GM12878 (cell line): ENCODE measurements at regions of chr1 and their contacts with region 1.

Region 1: DNA sequence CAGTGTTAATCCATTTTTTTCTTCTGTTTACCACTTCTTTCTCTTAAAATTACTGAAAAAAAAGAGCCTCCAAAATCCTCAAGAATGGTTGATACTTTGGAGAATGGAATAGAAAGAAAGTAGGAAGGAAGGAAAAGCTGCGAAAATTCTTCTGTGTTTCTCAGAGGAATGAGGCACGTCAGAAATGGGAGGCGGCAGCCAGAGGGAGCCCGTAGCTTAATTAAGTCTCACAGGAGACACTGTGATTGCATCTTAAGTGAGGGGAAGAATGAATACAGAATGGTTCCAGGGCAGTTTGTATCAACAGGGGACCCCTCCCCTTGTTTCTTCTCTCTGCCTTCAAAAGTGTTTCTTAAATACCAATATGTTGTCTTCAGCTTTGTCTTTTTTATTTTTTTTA is 1099.5 kb downstream of the PLA2G4A start:
- DNase-seq: no peak
- ATAC-seq: peak; percentile 92
- H3K4me3 ChIP-seq: no peak overlapping the region
- H3K27ac ChIP-seq: no peak overlapping the region
- H3K4me1 ChIP-seq: no peaks in the 10 kb centered on the region
- H3K27me3 ChIP-seq: no peaks in the 10 kb centered on the region
- CTCF ChIP-seq: peak; percentile 38 to 81 (median 40); a peak in 4 of 6 replicates
- EP300 ChIP-seq: no peak
- POLR2A ChIP-seq: no peak
- RAD21 ChIP-seq: peak; percentile 90

Region 2: GRCh38 chr1:187985897-187986654 is 57.8 kb after region 1 on chr1:
- CTCF ChIA-PET with region 1: interaction called, 5 read pairs
- POLR2A ChIA-PET with region 1: no interaction called
- RAD21 ChIA-PET with region 1: interaction called, 15 read pairs
- SMC1A ChIA-PET with region 1: interaction called, 8 read pairs
- in situ Hi-C with region 1: no loop called
- intact Hi-C with region 1: no loop called
- DNase-seq: peak; percentile 48
- ATAC-seq: peak; percentile 87
- H3K4me3 ChIP-seq: no peak overlapping the region
- H3K27ac ChIP-seq: peak overlapping the region; percentile 69
- H3K4me1 ChIP-seq: peaks cover 11% of the 10 kb centered on the region
- H3K27me3 ChIP-seq: no peaks in the 10 kb centered on the region
- CTCF ChIP-seq: no peak
- EP300 ChIP-seq: peak; percentile 81 to 84
- POLR2A ChIP-seq: no peak
- RAD21 ChIP-seq: no peak

Region 3: GRCh38 chr1:188128761-188129160 is 200.5 kb after region 1 on chr1:
- CTCF ChIA-PET with region 1: interaction called, 33 read pairs
- POLR2A ChIA-PET with region 1: no interaction called
- RAD21 ChIA-PET with region 1: interaction called, 23 read pairs
- SMC1A ChIA-PET with region 1: interaction called, 45 read pairs
- in situ Hi-C with region 1: no loop called
- intact Hi-C with region 1: loop called (anchors 2 kb)
- DNase-seq: no peak
- ATAC-seq: peak; percentile 69
- H3K4me3 ChIP-seq: no peak overlapping the region
- H3K27ac ChIP-seq: no peak overlapping the region
- H3K4me1 ChIP-seq: no peaks in the 10 kb centered on the region
- H3K27me3 ChIP-seq: no peaks in the 10 kb centered on the region
- CTCF ChIP-seq: peak in 1 of 3 experiments; percentile 19; a peak in 1 of 6 replicates
- EP300 ChIP-seq: no peak
- POLR2A ChIP-seq: no peak
- RAD21 ChIP-seq: peak; percentile 66

Region 4: GRCh38 chr1:188386161-188386560 is 457.9 kb after region 1 on chr1:
- CTCF ChIA-PET with region 1: interaction called, 6 read pairs
- POLR2A ChIA-PET with region 1: no interaction called
- RAD21 ChIA-PET with region 1: interaction called, 3 read pairs
- SMC1A ChIA-PET with region 1: no interaction called
- in situ Hi-C with region 1: no loop called
- intact Hi-C with region 1: loop called (anchors 10 kb)
- DNase-seq: no peak
- ATAC-seq: no peak
- H3K4me3 ChIP-seq: no peak overlapping the region
- H3K27ac ChIP-seq: no peak overlapping the region
- H3K4me1 ChIP-seq: no peaks in the 10 kb centered on the region
- H3K27me3 ChIP-seq: no peaks in the 10 kb centered on the region
- CTCF ChIP-seq: no peak
- EP300 ChIP-seq: no peak
- POLR2A ChIP-seq: no peak
- RAD21 ChIP-seq: no peak

Region 5: GRCh38 chr1:188782219-188782841 is 854.0 kb after region 1 on chr1:
- CTCF ChIA-PET with region 1: interaction called, 14 read pairs
- POLR2A ChIA-PET with region 1: no interaction called
- RAD21 ChIA-PET with region 1: interaction called, 3 read pairs
- SMC1A ChIA-PET with region 1: interaction called, 8 read pairs
- in situ Hi-C with region 1: no loop called
- intact Hi-C with region 1: no loop called
- DNase-seq: no peak
- ATAC-seq: peak; percentile 99
- H3K4me3 ChIP-seq: no peak overlapping the region
- H3K27ac ChIP-seq: no peak overlapping the region
- H3K4me1 ChIP-seq: no peaks in the 10 kb centered on the region
- H3K27me3 ChIP-seq: no peaks in the 10 kb centered on the region
- CTCF ChIP-seq: peak; percentile 40 to 64 (median 50); a peak in 4 of 6 replicates
- EP300 ChIP-seq: no peak
- POLR2A ChIP-seq: no peak
- RAD21 ChIP-seq: peak; percentile 41; the same call in 1 of the 2 replicates